PC-9 (cell line): ENCODE measurements at regions of chr12 and their contacts with region 1.

Region 1: DNA sequence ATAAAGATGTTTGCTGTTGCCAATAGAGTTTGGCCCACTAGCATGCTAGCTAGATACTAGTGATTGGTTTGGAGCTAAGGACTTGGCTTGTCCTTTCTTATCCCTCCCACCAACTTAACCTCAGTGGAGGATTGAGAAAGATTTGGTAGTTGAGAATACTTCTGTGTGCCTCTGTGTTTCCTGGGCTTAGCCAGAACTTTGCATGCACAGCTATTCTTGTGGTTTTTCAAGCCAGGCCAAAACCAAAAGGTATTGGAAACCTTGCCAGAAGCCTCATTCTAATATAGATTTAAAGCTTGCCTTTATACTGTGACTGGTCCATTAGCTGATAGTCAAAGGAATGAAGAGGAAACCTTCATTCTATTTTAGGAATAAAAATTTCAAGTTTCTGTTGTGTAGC is 188.5 kb downstream of the CCDC91 start:
- DNase-seq: no peak
- H3K4me3 ChIP-seq: no peak overlapping the region
- H3K27ac ChIP-seq: no peak overlapping the region
- H3K4me1 ChIP-seq: no peaks in the 10 kb centered on the region
- H3K27me3 ChIP-seq: no peaks in the 10 kb centered on the region
- CTCF ChIP-seq: no peak

Region 2: GRCh38 chr12:28415755-28416154 is 37.0 kb after region 1 on chr12:
- CTCF ChIA-PET with region 1: no interaction called
- POLR2A ChIA-PET with region 1: no interaction called
- intact Hi-C with region 1: loop called (anchors 1 kb)
- DNase-seq: no peak
- H3K4me3 ChIP-seq: no peak overlapping the region
- H3K27ac ChIP-seq: no peak overlapping the region
- H3K4me1 ChIP-seq: no peaks in the 10 kb centered on the region
- H3K27me3 ChIP-seq: no peaks in the 10 kb centered on the region
- CTCF ChIP-seq: no peak

Region 3: GRCh38 chr12:29269706-29270408 is 891.1 kb after region 1 on chr12:
- CTCF ChIA-PET with region 1: no interaction called
- POLR2A ChIA-PET with region 1: no interaction called
- intact Hi-C with region 1: loop called (anchors 10 kb)
- DNase-seq: no peak
- H3K4me3 ChIP-seq: no peak overlapping the region
- H3K27ac ChIP-seq: no peak overlapping the region
- H3K4me1 ChIP-seq: no peaks in the 10 kb centered on the region
- H3K27me3 ChIP-seq: no peaks in the 10 kb centered on the region
- CTCF ChIP-seq: no peak